ENCODE measurements at regions of chr19 and their contacts with region 1.

Region 1: GRCh38 chr19:52176366-52176970 is 5.0 kb upstream of the ZNF836 start:
- DNase-seq: no peak
- ATAC-seq: no peak
- H3K4me3 ChIP-seq: no peak overlapping the region
- H3K27ac ChIP-seq: no peak overlapping the region
- H3K4me1 ChIP-seq: no peaks in the 10 kb centered on the region
- H3K27me3 ChIP-seq: no peaks in the 10 kb centered on the region
- CTCF ChIP-seq: no peak

Region 2: DNA sequence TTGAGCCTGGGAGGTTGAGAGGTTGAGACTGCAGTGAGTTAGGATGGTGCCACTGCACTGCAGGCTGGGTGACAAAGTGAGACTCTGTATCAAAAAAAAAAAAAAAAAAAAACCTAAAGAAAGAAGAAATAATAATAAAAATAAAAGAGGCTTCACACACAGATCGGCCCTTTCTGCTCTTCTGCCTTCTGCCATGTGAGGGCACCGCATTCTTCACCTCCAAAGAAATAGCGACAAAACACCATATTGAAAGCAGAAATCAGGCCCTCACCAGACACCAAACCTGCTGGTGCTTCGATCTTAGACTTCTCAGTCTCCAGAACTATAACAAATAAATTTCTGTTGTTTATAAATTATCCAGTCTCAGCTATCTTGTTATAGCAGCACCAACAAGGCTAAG is 274.6 kb before region 1 on chr19:
- CTCF ChIA-PET with region 1: no interaction called
- POLR2A ChIA-PET with region 1: interaction called, 12 read pairs
- in situ Hi-C with region 1: no loop called
- intact Hi-C with region 1: no loop called
- DNase-seq: no peak
- ATAC-seq: no peak
- H3K4me3 ChIP-seq: no peak overlapping the region
- H3K27ac ChIP-seq: no peak overlapping the region
- H3K4me1 ChIP-seq: no peaks in the 10 kb centered on the region
- H3K27me3 ChIP-seq: no peaks in the 10 kb centered on the region
- CTCF ChIP-seq: no peak

Region 3: GRCh38 chr19:52155596-52156359 is 20.7 kb before region 1 on chr19:
- CTCF ChIA-PET with region 1: no interaction called
- POLR2A ChIA-PET with region 1: no interaction called
- in situ Hi-C with region 1: no loop called
- intact Hi-C with region 1: no loop called
- DNase-seq: no peak
- ATAC-seq: no peak
- H3K4me3 ChIP-seq: no peak overlapping the region
- H3K27ac ChIP-seq: no peak overlapping the region
- H3K4me1 ChIP-seq: no peaks in the 10 kb centered on the region
- H3K27me3 ChIP-seq: no peaks in the 10 kb centered on the region
- CTCF ChIP-seq: no peak